ENCODE measurements at regions of chr3 and their contacts with region 1.

Region 1: DNA sequence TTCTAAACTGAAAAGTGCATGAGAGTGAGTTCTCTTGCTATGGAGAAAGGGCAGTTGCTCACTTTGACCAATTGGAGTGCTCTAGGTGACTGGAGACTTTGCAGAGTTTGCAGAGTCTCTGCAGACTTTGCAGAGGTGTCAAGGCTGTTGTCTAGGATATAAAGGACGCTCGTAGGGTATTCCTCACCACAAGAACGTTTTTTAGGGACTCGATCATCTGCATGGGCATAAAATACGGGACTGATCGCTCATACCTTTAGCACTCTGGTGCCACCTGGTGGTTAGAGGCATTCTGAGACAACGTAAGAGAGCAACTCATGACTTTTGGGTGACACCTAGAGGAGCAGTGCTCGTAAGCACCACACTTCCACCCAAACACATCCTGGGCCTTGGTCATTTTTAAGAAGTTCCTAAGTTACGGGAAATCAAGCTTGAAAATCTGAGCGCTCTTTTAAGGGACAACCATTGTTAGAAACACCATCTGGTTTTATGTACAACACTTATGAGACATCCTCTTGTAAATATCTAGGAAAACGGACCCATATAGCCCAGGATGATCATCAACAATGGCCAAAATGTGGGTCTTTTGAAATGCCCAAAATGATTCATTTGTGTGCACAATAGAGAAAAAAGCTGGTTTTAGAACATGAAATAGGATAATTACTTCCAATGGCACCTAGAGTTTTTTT is 51.6 kb upstream of the XCR1 start:
- DNase-seq: peak; percentile 96
- H3K4me3 Mint-ChIP-seq: no peak overlapping the region
- H3K27ac Mint-ChIP-seq: no peak overlapping the region
- H3K4me1 Mint-ChIP-seq: peaks cover 5% of the 10 kb centered on the region
- H3K27me3 Mint-ChIP-seq: peaks cover 11% of the 10 kb centered on the region
- CTCF ChIP-seq: peak; percentile 98

Region 2: GRCh38 chr3:45841757-45842491 is 236.9 kb before region 1 on chr3 and contains the start of gene LZTFL1:
- CTCF ChIA-PET with region 1: interaction called, 7 read pairs
- POLR2A ChIA-PET with region 1: interaction called, 5 read pairs
- intact Hi-C with region 1: loop called (anchors 5 kb)
- DNase-seq: peak; percentile 96
- H3K4me3 Mint-ChIP-seq: peak within 1 kb of the TSS; percentile 94
- H3K27ac Mint-ChIP-seq: peak within 1 kb of the TSS; percentile 98
- H3K4me1 Mint-ChIP-seq: peaks cover 25% of the 10 kb centered on the region
- H3K27me3 Mint-ChIP-seq: peaks cover 40% of the 10 kb centered on the region
- CTCF ChIP-seq: no peak
- total RNA-seq, gene LZTFL1: 30.5 and 39.5 TPM in 2 replicates

Region 3: GRCh38 chr3:45938864-45939263 is 140.0 kb before region 1 on chr3:
- CTCF ChIA-PET with region 1: interaction called, 241 read pairs
- POLR2A ChIA-PET with region 1: interaction called, 6 read pairs
- intact Hi-C with region 1: loop called (anchors 1 kb)
- DNase-seq: peak; percentile 82
- H3K4me3 Mint-ChIP-seq: no peak overlapping the region
- H3K27ac Mint-ChIP-seq: no peak overlapping the region
- H3K4me1 Mint-ChIP-seq: peaks cover 6% of the 10 kb centered on the region
- H3K27me3 Mint-ChIP-seq: no peaks in the 10 kb centered on the region
- CTCF ChIP-seq: peak; percentile 79

Region 4: GRCh38 chr3:45995236-45996192 is 83.3 kb before region 1 on chr3 and contains the start of gene FYCO1:
- CTCF ChIA-PET with region 1: interaction called, 33 read pairs
- POLR2A ChIA-PET with region 1: no interaction called
- intact Hi-C with region 1: no loop called
- DNase-seq: peak; percentile 84
- H3K4me3 Mint-ChIP-seq: peak within 1 kb of the TSS; percentile 80
- H3K27ac Mint-ChIP-seq: peak within 1 kb of the TSS; percentile 35
- H3K4me1 Mint-ChIP-seq: peaks cover 6% of the 10 kb centered on the region
- H3K27me3 Mint-ChIP-seq: no peaks in the 10 kb centered on the region
- CTCF ChIP-seq: no peak
- total RNA-seq, gene FYCO1: 17.0 and 18.4 TPM in 2 replicates

Region 5: DNA sequence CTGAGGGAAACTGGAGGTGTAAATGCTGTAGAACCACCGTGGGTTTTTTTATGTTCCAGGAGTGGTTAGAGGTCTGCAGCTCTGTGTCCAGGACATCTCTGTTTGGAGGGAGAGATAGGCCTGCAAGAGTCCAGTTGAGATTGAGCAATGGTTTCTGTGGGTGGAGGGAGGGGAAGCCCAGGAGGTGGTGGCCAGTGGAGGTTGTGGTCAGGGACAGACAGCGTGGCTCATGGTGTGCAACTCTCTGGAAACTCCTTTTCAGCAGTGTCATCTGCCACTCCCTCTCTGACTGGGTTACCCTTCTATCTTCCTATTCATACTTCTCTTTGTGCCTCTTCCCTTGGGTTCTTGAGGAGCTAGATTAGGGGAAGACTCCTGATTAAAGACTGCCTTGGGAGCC is 61.1 kb before region 1 on chr3:
- CTCF ChIA-PET with region 1: no interaction called
- POLR2A ChIA-PET with region 1: no interaction called
- intact Hi-C with region 1: no loop called
- DNase-seq: peak; percentile 13
- H3K4me3 Mint-ChIP-seq: no peak overlapping the region
- H3K27ac Mint-ChIP-seq: no peak overlapping the region
- H3K4me1 Mint-ChIP-seq: no peaks in the 10 kb centered on the region
- H3K27me3 Mint-ChIP-seq: no peaks in the 10 kb centered on the region
- CTCF ChIP-seq: no peak

Region 6: GRCh38 chr3:46368569-46368968 is 289.7 kb after region 1 on chr3:
- CTCF ChIA-PET with region 1: interaction called, 202 read pairs
- POLR2A ChIA-PET with region 1: interaction called, 4 read pairs
- intact Hi-C with region 1: loop called (anchors 2 kb)
- DNase-seq: peak; percentile 57
- H3K4me3 Mint-ChIP-seq: no peak overlapping the region
- H3K27ac Mint-ChIP-seq: no peak overlapping the region
- H3K4me1 Mint-ChIP-seq: no peaks in the 10 kb centered on the region
- H3K27me3 Mint-ChIP-seq: peaks cover 11% of the 10 kb centered on the region
- CTCF ChIP-seq: peak; percentile 28